ENCODE measurements at regions of chr9 and their contacts with region 1.

Region 1: GRCh38 chr9:120109242-120109641 is 470.7 kb downstream of the CDK5RAP2 start:
- DNase-seq: no peak
- ATAC-seq: no peak
- H3K4me3 ChIP-seq: no peak overlapping the region
- H3K27ac ChIP-seq: no peak overlapping the region
- H3K4me1 ChIP-seq: no peaks in the 10 kb centered on the region
- H3K27me3 ChIP-seq: no peaks in the 10 kb centered on the region
- CTCF ChIP-seq: no peak

Region 2: DNA sequence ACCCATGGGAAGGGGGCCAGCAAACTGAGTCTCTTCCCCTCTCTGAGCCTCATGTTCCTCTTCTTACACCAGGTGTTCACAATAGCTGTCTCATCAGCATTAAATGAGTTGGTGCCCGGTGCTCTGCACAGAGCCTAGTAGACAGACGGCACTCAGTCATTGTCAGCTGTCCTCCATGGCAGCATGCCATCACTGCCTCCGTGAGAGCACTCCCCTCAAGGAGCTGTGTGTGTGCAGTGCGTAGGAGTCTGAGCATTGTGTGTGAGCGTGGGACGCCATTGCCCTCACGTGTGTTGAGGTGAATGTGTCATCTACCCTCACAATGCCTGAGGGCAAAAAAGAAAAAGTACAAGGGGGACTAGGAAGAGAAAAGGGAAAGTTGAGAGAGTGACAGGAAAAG is 65.8 kb before region 1 on chr9:
- intact Hi-C with region 1: loop called in 1 of 3 experiments (anchors 10 kb)
- DNase-seq: no peak
- ATAC-seq: no peak
- H3K4me3 ChIP-seq: no peak overlapping the region
- H3K27ac ChIP-seq: no peak overlapping the region
- H3K4me1 ChIP-seq: no peaks in the 10 kb centered on the region
- H3K27me3 ChIP-seq: no peaks in the 10 kb centered on the region
- CTCF ChIP-seq: no peak

Region 3: DNA sequence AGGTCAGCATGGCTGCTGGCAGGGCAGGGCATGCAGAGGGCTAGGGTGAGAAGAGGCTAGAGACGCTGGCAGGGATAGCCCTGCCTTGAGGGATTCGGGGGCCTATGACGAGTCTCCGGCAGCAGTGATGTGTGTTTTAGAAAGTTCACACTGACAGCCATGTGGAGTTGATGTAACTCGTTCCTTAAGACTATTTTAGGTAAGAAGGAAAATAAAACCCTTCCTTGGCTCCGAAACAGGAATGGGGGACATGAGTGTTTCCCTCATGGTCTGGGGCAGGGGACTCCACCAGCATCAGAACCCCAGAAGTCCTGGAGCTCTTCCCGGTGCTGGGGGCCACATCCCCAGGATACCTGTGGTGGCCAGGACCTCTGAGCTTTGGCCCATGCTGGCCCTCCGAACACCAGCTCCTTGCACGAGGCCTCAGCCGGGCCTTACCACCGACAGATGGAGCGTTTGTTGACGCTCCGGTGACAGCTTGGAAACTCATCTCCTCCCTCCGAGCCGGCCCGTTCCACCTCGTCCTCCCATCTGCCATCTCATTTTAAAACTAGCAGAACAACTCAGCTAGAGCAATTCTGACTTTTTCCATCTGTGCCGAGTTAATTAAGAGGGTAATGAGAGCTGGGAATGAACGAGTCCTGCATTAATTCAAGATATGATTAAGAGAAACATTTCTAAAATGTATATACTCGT is 133.0 kb after region 1 on chr9:
- intact Hi-C with region 1: no loop called
- DNase-seq: no peak
- ATAC-seq: no peak
- H3K4me3 ChIP-seq: no peak overlapping the region
- H3K27ac ChIP-seq: no peak overlapping the region
- H3K4me1 ChIP-seq: no peaks in the 10 kb centered on the region
- H3K27me3 ChIP-seq: no peaks in the 10 kb centered on the region
- CTCF ChIP-seq: no peak